Mammary epithelial cell (primary cell): ENCODE measurements at regions of chr11 and their contacts with region 1.

Region 1: DNA sequence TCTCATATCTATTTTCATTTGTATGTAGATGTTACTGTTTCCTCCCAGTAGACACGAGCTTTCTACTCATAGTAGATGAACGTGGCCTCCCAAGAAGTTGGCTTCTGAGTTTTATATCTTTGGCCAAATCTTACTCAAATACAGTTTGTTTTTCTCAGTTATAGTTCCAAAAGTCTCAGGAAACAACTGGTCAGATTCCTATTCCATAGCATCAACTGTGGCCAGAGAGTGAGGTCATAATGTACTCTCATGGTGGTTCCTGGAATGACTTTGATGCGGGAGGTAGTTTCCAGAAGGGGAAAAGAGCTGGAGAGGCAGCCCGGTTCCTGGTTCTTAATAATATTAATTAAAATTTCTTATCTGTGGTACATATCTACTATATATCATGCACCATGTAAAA is 77.3 kb downstream of the SLC17A6 start:
- DNase-seq: no peak
- H3K4me3 ChIP-seq: no peak overlapping the region
- H3K27ac ChIP-seq: no peak overlapping the region
- H3K4me1 ChIP-seq: no peaks in the 10 kb centered on the region
- H3K27me3 ChIP-seq: no peaks in the 10 kb centered on the region
- CTCF ChIP-seq: no peak

Region 2: DNA sequence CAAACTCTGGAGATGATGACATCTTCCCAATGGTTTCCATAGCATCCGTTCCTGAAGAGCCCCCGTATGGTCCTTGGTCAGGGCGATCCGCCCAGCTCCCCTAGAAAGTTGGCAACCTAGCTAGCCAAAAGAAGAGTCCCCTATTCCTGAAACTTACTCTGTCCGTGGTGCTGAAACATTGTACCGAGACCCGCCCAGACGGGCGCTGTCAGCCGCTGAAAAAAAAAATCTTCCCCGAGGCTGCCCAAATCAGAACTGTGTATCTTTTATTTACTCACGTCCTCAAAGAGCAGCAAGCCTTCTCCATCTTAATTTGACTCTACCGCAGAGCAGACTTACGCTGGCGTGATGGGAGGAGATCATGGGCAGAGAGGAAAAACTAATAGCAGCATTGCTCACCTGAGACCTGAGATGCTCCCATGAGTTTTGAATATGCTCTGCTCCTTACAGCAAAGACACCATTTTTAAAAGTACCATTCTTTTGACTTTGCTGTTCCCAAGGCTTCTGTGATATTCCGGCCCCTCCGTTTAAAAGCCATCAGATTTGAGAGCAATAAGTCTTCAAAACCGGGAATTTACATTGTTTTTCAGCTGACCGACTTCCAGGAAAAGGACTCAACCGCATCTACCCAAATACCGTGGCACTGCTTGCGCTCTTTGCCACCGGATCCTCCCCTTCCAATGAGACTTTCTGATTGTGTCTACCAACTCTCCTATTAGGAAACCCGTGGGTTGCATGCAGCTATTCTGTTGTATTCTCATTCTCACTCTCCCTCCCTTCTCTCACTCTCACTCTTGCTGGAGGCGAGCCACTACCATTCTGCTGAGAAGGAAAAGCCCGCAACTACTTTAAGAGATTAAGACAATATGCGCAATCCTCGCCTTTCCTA is 77.6 kb before region 1 on chr11 and contains the start of gene SLC17A6:
- CTCF ChIA-PET with region 1: no interaction called
- dilution Hi-C with region 1: no loop called
- in situ Hi-C with region 1: no loop called
- intact Hi-C with region 1: loop called (anchors 5 kb)
- DNase-seq: peak; percentile 31
- H3K4me3 ChIP-seq: no peak within 1 kb of the TSS
- H3K27ac ChIP-seq: no peak within 1 kb of the TSS
- H3K4me1 ChIP-seq: no peaks in the 10 kb centered on the region
- H3K27me3 ChIP-seq: peaks cover 35% of the 10 kb centered on the region
- CTCF ChIP-seq: no peak
- total RNA-seq, gene SLC17A6: not detected